ENCODE measurements at regions of chr3 and their contacts with region 1.

Region 1: DNA sequence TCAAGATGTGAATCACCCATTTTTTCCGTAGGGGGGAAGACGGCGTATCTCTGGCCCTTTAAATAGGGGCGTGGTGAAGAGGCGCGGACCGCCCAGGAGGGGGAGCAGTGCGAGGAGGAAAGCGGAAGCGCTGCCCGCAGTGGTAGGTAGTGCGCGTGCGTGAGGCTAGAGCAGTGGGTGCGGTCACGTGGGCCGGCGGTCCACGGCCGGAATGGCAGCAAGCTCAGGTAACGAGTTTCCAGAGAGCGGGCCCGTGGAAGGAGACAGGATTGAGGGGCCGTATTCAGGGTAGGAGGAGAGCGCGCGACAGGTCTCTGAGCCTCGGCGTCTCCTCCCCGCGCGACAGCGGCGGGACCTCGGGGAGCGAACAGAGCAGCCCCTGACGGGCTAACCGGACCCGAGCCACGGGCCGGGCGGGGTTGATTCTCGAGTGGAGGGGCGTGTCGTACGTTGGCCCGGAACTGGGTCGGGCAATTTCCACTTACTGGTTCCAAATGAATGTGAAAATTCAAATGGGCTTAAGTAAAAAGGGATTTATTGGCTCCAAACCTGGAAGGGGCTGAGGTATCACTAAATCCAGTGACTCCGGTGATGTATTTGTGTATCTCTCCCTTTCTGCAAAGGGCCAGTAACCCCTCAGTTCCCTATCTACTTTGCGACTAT is at the start of gene VPS8:
- DNase-seq: peak; percentile 92 to 98 (median 97)
- ATAC-seq: peak; percentile 82
- H3K4me3 ChIP-seq: peak within 1 kb of the TSS; percentile 64 to 86
- H3K4me3 Mint-ChIP-seq: peak within 1 kb of the TSS; percentile 99
- H3K27ac ChIP-seq: peak within 1 kb of the TSS; percentile 82 to 87
- H3K27ac Mint-ChIP-seq: peak within 1 kb of the TSS; percentile 99
- H3K4me1 ChIP-seq: peaks cover 46% of the 10 kb centered on the region
- H3K4me1 Mint-ChIP-seq: peaks cover 50% of the 10 kb centered on the region
- H3K27me3 ChIP-seq: no peaks in the 10 kb centered on the region
- H3K27me3 Mint-ChIP-seq: no peaks in the 10 kb centered on the region
- CTCF ChIP-seq: peak; percentile 42
- total RNA-seq, gene VPS8: 61.4 to 65.0 TPM

Region 2: GRCh38 chr3:184185461-184186308 is 626.4 kb before region 1 on chr3 and contains the start of gene ABCF3:
- CTCF ChIA-PET with region 1: no interaction called
- POLR2A ChIA-PET with region 1: no interaction called
- intact Hi-C with region 1: loop called in 1 of 2 experiments (anchors 5 kb)
- DNase-seq: peak; percentile 98 to 100 (median 99)
- ATAC-seq: peak; percentile 97
- H3K4me3 ChIP-seq: peak within 1 kb of the TSS; percentile 95 to 98
- H3K4me3 Mint-ChIP-seq: peak within 1 kb of the TSS; percentile 98
- H3K27ac ChIP-seq: peak within 1 kb of the TSS; percentile 82 to 83
- H3K27ac Mint-ChIP-seq: peak within 1 kb of the TSS; percentile 96
- H3K4me1 ChIP-seq: peaks cover 26% of the 10 kb centered on the region
- H3K4me1 Mint-ChIP-seq: peaks cover 42% of the 10 kb centered on the region
- H3K27me3 ChIP-seq: no peaks in the 10 kb centered on the region
- H3K27me3 Mint-ChIP-seq: no peaks in the 10 kb centered on the region
- CTCF ChIP-seq: no peak
- total RNA-seq, gene ABCF3: 192 to 193 TPM

Region 3: DNA sequence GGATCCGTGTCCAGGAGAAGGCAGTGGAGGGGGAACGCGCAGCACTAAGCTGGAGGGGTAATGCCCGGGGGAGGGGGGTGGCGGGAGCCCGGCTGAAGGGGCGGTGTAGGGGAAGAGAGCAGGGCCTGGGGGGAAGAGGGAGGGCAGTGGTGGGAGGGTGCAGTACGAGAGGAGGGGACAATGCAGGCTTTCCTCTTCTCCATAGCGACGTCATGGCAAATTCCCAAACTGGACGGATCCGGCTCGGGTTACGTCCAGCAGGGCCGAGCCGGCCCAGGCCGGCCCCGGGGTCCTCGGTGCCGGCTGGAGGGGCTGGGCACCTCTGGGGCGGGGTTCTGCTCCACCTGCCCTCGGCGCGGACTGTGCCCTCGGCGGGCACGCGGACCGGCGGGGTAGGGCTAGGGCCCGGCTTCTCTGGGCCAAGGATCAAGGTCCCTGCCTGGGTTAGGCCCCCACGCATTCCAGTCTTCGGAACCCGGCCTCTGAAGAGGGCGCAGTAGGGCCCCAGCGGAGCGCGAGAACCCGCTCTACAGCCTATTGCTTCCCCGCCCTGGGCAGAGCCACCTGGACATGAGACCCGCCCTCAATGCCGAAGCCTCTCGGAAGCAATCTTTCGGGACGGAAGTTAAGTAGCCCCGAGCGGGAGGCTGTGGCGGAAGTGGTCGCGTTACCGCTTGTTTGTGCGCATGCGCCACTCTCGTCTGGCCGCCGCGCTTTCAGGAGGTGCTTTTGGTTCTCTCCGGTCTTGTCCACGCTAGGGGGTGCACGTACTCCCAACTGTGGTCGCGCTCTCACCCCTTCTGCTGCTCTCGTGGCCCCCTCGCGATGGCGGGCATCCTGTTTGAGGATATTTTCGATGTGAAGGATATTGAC is 449.2 kb before region 1 on chr3:
- CTCF ChIA-PET with region 1: no interaction called
- POLR2A ChIA-PET with region 1: no interaction called
- intact Hi-C with region 1: loop called in 1 of 2 experiments (anchors 1 kb)
- DNase-seq: peak; percentile 81 to 98 (median 93)
- ATAC-seq: peak; percentile 71
- H3K4me3 ChIP-seq: peak overlapping the region; percentile 62 to 93
- H3K4me3 Mint-ChIP-seq: peak overlapping the region; percentile 98
- H3K27ac ChIP-seq: peak overlapping the region; percentile 74 to 87
- H3K27ac Mint-ChIP-seq: peak overlapping the region; percentile 93
- H3K4me1 ChIP-seq: peaks cover 15% of the 10 kb centered on the region
- H3K4me1 Mint-ChIP-seq: peaks cover 30% of the 10 kb centered on the region
- H3K27me3 ChIP-seq: no peaks in the 10 kb centered on the region
- H3K27me3 Mint-ChIP-seq: no peaks in the 10 kb centered on the region
- CTCF ChIP-seq: peak; percentile 13

Region 4: GRCh38 chr3:184800349-184800930 is 11.7 kb before region 1 on chr3:
- CTCF ChIA-PET with region 1: interaction called, 26 read pairs
- POLR2A ChIA-PET with region 1: no interaction called
- intact Hi-C with region 1: no loop called
- DNase-seq: no peak
- ATAC-seq: no peak
- H3K4me3 ChIP-seq: no peak overlapping the region
- H3K4me3 Mint-ChIP-seq: no peak overlapping the region
- H3K27ac ChIP-seq: no peak overlapping the region
- H3K27ac Mint-ChIP-seq: no peak overlapping the region
- H3K4me1 ChIP-seq: no peaks in the 10 kb centered on the region
- H3K4me1 Mint-ChIP-seq: peaks cover 4% of the 10 kb centered on the region
- H3K27me3 ChIP-seq: peaks cover 3% of the 10 kb centered on the region in 2 experiments
- H3K27me3 Mint-ChIP-seq: peaks cover 24% of the 10 kb centered on the region
- CTCF ChIP-seq: no peak

Region 5: GRCh38 chr3:184859850-184860249 is 47.7 kb after region 1 on chr3:
- CTCF ChIA-PET with region 1: no interaction called
- POLR2A ChIA-PET with region 1: no interaction called
- intact Hi-C with region 1: no loop called
- DNase-seq: no peak
- ATAC-seq: no peak
- H3K4me3 ChIP-seq: no peak overlapping the region
- H3K4me3 Mint-ChIP-seq: no peak overlapping the region
- H3K27ac ChIP-seq: no peak overlapping the region
- H3K27ac Mint-ChIP-seq: no peak overlapping the region
- H3K4me1 ChIP-seq: no peaks in the 10 kb centered on the region
- H3K4me1 Mint-ChIP-seq: no peaks in the 10 kb centered on the region
- H3K27me3 ChIP-seq: no peaks in the 10 kb centered on the region
- H3K27me3 Mint-ChIP-seq: no peaks in the 10 kb centered on the region
- CTCF ChIP-seq: no peak

Region 6: GRCh38 chr3:185282696-185283394 is 470.7 kb after region 1 on chr3:
- CTCF ChIA-PET with region 1: no interaction called
- POLR2A ChIA-PET with region 1: no interaction called
- intact Hi-C with region 1: loop called in 1 of 2 experiments (anchors 5 kb)
- DNase-seq: peak; percentile 86 to 98 (median 95)
- ATAC-seq: peak; percentile 98
- H3K4me3 ChIP-seq: peak overlapping the region; percentile 75 to 82
- H3K4me3 Mint-ChIP-seq: peak overlapping the region; percentile 86
- H3K27ac ChIP-seq: peak overlapping the region; percentile 58 to 78
- H3K27ac Mint-ChIP-seq: peak overlapping the region; percentile 88
- H3K4me1 ChIP-seq: peaks cover 14% of the 10 kb centered on the region
- H3K4me1 Mint-ChIP-seq: peaks cover 18% of the 10 kb centered on the region
- H3K27me3 ChIP-seq: no peaks in the 10 kb centered on the region
- H3K27me3 Mint-ChIP-seq: peaks cover 24% of the 10 kb centered on the region
- CTCF ChIP-seq: no peak

Region 7: DNA sequence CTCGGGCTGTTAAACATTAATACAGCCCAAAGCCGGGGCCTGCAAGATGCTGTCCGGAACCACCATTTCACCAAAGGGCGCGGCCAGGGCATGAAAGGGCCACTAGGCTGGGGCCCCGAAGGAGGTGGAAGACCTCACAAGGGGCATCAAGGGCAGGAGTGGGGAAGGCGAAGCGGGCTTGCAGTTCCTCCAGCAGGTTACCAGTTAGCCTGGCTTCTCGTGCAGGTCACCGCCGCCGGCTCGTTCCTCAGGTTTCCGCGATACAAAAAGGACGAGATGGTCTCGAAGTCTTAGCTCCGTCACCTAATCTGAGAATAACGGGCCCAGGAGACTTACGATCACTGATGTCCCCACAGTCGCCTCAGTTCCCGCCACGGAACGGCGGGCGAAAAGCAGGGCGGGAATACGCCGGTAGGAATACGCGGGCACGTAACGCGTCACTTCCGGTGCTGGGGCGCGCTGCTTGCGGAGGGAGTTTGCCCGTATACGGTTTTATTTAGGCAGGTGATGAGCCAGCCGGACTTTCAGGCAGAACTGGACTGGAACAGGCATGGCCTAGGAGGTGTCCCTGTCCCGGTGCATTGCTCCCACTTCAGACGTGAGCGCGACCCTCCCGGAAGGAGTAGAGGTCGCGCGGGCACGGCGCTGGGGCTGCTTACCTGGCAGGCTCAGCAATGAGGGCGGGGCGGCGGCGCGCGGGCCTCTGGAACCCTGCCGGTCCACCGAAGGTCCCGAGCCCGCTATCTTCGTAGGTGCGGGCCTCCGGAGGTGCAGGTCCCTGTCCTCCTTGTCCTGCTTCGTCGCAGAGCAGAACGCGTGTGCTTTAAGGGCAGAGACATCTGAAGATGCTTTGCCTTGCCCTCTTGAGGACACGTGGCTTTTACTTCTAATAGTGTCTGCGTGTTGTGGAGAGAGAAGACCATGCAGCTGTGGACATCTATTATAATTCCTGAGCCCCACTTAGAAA is 1994.2 kb after region 1 on chr3 and contains the start of gene RFC4:
- CTCF ChIA-PET with region 1: no interaction called
- POLR2A ChIA-PET with region 1: no interaction called
- intact Hi-C with region 1: loop called in 1 of 2 experiments (anchors 10 kb)
- DNase-seq: peak; percentile 60 to 91 (median 85)
- ATAC-seq: peak; percentile 86
- H3K4me3 ChIP-seq: peak within 1 kb of the TSS; percentile 81 to 97
- H3K4me3 Mint-ChIP-seq: peak within 1 kb of the TSS; percentile 97
- H3K27ac ChIP-seq: peak within 1 kb of the TSS; percentile 89 to 92
- H3K27ac Mint-ChIP-seq: peak within 1 kb of the TSS; percentile 97
- H3K4me1 ChIP-seq: peaks cover 23% of the 10 kb centered on the region
- H3K4me1 Mint-ChIP-seq: peaks cover 22% of the 10 kb centered on the region
- H3K27me3 ChIP-seq: no peaks in the 10 kb centered on the region
- H3K27me3 Mint-ChIP-seq: no peaks in the 10 kb centered on the region
- CTCF ChIP-seq: no peak
- total RNA-seq, gene RFC4: 12.7 to 13.9 TPM